Left ventricle myocardium superior (tissue), 1 donor: ENCODE measurements at regions of chr5 and their contacts with region 1.

Region 1: GRCh38 chr5:66814146-66814991 is 218.2 kb downstream of the MAST4 start:
- DNase-seq: no peak
- ATAC-seq: peak; percentile 36

Region 2: DNA sequence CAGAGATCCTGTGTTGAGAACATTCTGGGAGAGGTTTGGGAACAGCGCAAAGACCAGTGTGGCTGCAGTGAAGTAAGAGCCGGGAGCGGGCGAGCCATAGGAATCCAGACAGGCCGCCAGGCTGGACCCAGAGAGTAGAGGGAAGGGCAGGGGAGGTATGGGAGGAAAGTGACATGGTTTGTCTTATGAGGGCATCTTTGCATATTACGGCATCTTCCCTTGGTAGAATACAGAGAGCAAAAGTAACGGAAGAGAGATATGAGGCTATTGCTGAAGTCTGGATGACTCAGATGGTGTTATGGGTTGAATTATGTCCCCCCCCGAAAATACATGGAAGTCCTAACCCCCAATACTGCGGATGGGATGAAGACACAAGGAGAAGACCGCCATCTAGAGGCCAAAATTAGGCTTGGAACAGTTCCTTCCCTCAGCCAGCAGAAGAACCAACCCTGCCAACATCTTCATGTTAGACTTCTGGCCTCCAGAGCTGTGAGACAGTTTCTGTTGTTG is 50.0 kb after region 1 on chr5:
- intact Hi-C with region 1: loop called (anchors 10 kb)
- DNase-seq: no peak
- ATAC-seq: peak; percentile 60

Region 3: GRCh38 chr5:67156976-67157583 is 342.7 kb after region 1 on chr5:
- intact Hi-C with region 1: loop called (anchors 10 kb)
- DNase-seq: peak; percentile 40
- ATAC-seq: no peak

Region 4: GRCh38 chr5:67209142-67209771 is 394.9 kb after region 1 on chr5:
- intact Hi-C with region 1: loop called (anchors 10 kb)
- DNase-seq: no peak
- ATAC-seq: peak; percentile 79